Caco-2 (cell line): ENCODE measurements at regions of chr1 and their contacts with region 1.

Region 1: DNA sequence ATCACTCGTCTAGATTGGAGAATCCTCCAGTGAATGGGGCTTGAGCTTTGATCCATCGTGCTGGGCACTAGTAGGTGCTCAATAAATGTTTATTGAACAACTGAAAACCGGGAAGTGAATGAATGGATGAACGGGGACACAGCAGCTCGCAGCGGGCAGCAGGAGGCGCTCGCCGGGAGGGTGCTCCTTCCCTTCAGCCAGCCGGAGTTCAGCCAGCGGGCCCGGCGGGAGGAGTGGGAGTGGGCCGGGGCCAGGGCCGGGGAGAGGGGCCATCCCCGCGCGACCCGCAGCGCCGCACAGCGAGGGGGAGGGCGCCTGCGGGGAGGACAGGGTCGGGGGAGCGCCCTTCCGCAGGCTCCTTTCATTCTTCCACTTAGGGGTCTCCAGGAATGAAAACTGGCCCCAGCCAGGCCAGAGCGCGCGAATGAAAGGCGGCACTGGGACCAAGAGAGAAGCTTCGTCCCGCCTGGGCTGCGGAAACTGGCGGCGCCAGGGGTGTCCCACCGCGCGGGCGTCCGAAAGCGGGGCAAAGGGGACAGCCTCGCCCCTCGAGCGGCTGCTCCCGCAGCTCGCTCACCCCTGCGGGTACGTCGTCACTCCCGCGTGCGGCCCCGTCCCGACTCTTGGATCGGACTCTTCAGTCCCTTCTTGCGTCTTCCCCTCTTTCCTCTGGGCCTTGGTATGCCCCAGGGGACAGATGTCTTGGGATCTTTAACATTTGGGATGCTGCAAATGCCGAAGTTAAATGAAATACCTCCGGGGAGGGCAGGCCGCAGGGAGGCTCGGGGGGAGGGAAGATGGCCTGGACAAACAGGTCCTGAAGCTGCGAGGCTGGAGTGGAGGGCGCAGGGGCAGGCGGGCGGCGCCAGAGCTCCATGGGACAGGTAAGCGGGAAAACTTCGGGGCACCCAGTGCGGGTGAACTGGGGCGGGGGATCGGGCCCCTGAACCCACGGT is 3.6 kb upstream of the INAVA start:
- DNase-seq: peak; percentile 93 to 95
- H3K4me3 ChIP-seq: peak overlapping the region; percentile 73
- H3K4me3 Mint-ChIP-seq: peak overlapping the region; percentile 97
- H3K27ac Mint-ChIP-seq: peak overlapping the region; percentile 94
- H3K4me1 ChIP-seq: peaks cover 15% of the 10 kb centered on the region
- H3K4me1 Mint-ChIP-seq: peaks cover 30% of the 10 kb centered on the region
- H3K27me3 ChIP-seq: no peaks in the 10 kb centered on the region
- H3K27me3 Mint-ChIP-seq: no peaks in the 10 kb centered on the region
- CTCF ChIP-seq: peak; percentile 65 to 78

Region 2: DNA sequence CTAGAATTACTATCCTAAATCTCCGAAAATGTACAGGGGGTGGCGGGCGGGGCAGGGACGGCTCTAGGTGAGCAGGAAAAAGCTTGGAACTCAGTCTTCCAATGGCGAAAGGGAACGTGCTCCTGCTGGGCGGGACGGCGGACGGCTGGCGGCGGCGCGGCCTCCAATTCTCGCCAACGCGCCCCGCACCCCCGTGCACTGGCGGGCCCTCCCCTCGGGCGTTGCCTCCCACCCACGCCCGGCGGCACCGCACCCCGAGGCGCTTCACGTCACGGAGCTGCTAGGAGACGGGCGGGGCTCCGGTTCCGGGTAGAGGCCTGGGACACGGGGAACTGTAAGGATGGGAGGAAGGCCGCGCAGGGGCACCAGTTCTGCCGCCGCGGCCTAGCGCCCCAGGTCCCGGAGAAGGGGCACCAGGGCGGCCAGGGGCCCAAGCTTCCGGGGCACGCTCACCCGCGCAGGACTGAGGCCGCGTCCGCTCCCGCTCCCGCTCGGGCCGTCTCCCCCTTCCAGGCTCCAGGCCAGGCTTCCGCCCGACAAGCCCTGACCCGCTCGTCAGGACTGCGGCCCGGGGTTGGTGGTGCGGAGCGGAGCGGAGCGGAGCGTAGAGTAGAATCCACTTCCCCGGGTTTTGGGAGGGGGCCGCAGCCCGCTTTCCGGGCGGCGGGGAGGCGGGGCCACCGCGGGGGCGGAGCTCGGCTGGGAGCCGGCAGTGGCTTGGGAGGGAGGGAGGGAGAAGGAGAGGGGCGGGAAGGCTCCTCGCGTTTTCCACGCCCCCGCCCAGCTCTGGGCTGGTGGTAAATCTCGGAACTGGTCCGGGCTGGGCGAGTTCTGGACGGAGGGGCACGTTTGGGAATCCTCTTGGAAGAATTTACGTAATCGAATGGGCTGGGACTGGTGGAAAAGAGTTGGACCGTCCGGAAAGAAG is 221.5 kb before region 1 on chr1 and contains the start of gene DDX59:
- CTCF ChIA-PET with region 1: no interaction called
- POLR2A ChIA-PET with region 1: interaction called, 13 read pairs
- intact Hi-C with region 1: loop called (anchors 5 kb)
- DNase-seq: peak; percentile 97
- H3K4me3 ChIP-seq: peak within 1 kb of the TSS; percentile 97
- H3K4me3 Mint-ChIP-seq: peak within 1 kb of the TSS; percentile 99
- H3K27ac Mint-ChIP-seq: peak within 1 kb of the TSS; percentile 99
- H3K4me1 ChIP-seq: peaks cover 16% of the 10 kb centered on the region
- H3K4me1 Mint-ChIP-seq: peaks cover 10% of the 10 kb centered on the region
- H3K27me3 ChIP-seq: no peaks in the 10 kb centered on the region
- H3K27me3 Mint-ChIP-seq: no peaks in the 10 kb centered on the region
- CTCF ChIP-seq: no peak
- total RNA-seq, gene DDX59: 13.5 and 16.3 TPM in 2 replicates

Region 3: DNA sequence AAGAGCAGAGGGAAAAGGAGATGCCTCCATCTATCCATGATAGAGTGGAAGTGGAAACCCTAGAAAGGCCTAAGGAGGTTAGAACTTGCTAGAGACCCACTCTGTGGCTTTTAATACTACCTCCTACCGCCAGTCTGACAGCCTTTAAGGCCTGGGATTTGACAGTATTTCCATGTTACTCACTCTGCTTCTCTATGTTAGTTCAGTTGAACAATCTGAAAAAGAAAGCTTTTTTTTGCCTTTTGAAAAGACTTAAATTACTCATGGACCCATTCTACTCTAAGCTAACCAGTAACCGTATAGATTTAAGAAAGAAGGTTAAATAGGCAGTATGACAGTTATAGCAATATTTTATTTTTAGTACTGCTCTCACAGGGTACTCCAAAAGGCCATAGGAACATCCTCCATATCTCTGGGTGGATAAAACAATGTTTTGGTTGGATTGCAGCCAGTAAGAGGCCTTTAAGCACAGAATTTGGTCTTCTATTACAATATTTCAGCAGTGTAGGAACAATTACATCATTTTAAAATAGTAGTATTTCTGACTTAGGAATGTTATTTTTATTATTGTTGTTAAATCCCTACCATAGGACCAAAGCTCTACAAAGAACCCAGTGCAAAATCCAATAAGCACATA is 34.3 kb before region 1 on chr1:
- CTCF ChIA-PET with region 1: no interaction called
- POLR2A ChIA-PET with region 1: no interaction called
- intact Hi-C with region 1: no loop called
- DNase-seq: no peak
- H3K4me3 ChIP-seq: no peak overlapping the region
- H3K4me3 Mint-ChIP-seq: no peak overlapping the region
- H3K27ac Mint-ChIP-seq: no peak overlapping the region
- H3K4me1 ChIP-seq: no peaks in the 10 kb centered on the region
- H3K4me1 Mint-ChIP-seq: no peaks in the 10 kb centered on the region
- H3K27me3 ChIP-seq: no peaks in the 10 kb centered on the region
- H3K27me3 Mint-ChIP-seq: no peaks in the 10 kb centered on the region
- CTCF ChIP-seq: no peak

Region 4: DNA sequence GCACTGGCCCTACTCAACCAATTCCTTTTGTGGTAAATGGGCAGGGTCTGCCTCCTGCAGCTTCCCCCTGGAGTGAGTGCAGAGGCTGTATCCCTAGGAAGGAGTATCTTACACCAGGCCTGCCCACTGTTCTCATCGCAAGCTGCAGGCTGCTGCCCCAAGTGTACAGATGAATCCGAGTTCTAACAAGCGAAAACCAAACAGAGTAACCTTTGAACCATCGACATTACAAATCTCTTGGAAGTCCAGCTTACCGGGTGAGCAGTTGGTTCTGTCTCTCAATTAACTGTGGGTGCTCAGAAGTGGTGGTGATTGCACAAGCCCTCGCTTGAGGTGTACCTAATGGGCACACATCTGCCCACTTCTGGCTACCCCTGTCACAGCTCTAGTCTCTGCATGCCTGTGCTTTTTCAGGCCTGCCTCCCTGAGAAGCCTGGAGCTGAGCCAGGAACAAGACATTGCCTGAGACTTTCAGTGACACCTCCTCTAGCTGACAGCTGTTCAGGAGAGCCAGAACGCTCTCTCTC is 26.3 kb after region 1 on chr1:
- CTCF ChIA-PET with region 1: interaction called, 7 read pairs
- POLR2A ChIA-PET with region 1: interaction called, 3 read pairs
- intact Hi-C with region 1: loop called (anchors 2 kb)
- DNase-seq: peak in 1 of 2 experiments; percentile 43
- H3K4me3 ChIP-seq: no peak overlapping the region
- H3K4me3 Mint-ChIP-seq: no peak overlapping the region
- H3K27ac Mint-ChIP-seq: peak overlapping the region; percentile 75
- H3K4me1 ChIP-seq: peaks cover 7% of the 10 kb centered on the region
- H3K4me1 Mint-ChIP-seq: peaks cover 10% of the 10 kb centered on the region
- H3K27me3 ChIP-seq: no peaks in the 10 kb centered on the region
- H3K27me3 Mint-ChIP-seq: no peaks in the 10 kb centered on the region
- CTCF ChIP-seq: no peak

Region 5: GRCh38 chr1:200971955-200972711 is 81.0 kb after region 1 on chr1:
- CTCF ChIA-PET with region 1: interaction called, 9 read pairs
- POLR2A ChIA-PET with region 1: no interaction called
- intact Hi-C with region 1: loop called (anchors 1 kb)
- DNase-seq: peak; percentile 50 to 67
- H3K4me3 ChIP-seq: no peak overlapping the region
- H3K4me3 Mint-ChIP-seq: no peak overlapping the region
- H3K27ac Mint-ChIP-seq: no peak overlapping the region
- H3K4me1 ChIP-seq: no peaks in the 10 kb centered on the region
- H3K4me1 Mint-ChIP-seq: no peaks in the 10 kb centered on the region
- H3K27me3 ChIP-seq: no peaks in the 10 kb centered on the region
- H3K27me3 Mint-ChIP-seq: no peaks in the 10 kb centered on the region
- CTCF ChIP-seq: peak; percentile 60 to 94

Region 6: GRCh38 chr1:201023517-201023902 is 132.4 kb after region 1 on chr1 and contains the start of gene KIF21B:
- CTCF ChIA-PET with region 1: interaction called, 4 read pairs
- POLR2A ChIA-PET with region 1: interaction called, 4 read pairs
- intact Hi-C with region 1: loop called (anchors 5 kb)
- DNase-seq: peak; percentile 87 to 94
- H3K4me3 ChIP-seq: peak within 1 kb of the TSS; percentile 63
- H3K4me3 Mint-ChIP-seq: peak within 1 kb of the TSS; percentile 66
- H3K27ac Mint-ChIP-seq: no peak within 1 kb of the TSS
- H3K4me1 ChIP-seq: peaks cover 21% of the 10 kb centered on the region
- H3K4me1 Mint-ChIP-seq: peaks cover 25% of the 10 kb centered on the region
- H3K27me3 ChIP-seq: no peaks in the 10 kb centered on the region; the same call in 1 of the 2 replicates
- H3K27me3 Mint-ChIP-seq: peaks cover 3% of the 10 kb centered on the region
- CTCF ChIP-seq: no peak
- total RNA-seq, gene KIF21B: 2.4 and 2.6 TPM in 2 replicates

Region 7: DNA sequence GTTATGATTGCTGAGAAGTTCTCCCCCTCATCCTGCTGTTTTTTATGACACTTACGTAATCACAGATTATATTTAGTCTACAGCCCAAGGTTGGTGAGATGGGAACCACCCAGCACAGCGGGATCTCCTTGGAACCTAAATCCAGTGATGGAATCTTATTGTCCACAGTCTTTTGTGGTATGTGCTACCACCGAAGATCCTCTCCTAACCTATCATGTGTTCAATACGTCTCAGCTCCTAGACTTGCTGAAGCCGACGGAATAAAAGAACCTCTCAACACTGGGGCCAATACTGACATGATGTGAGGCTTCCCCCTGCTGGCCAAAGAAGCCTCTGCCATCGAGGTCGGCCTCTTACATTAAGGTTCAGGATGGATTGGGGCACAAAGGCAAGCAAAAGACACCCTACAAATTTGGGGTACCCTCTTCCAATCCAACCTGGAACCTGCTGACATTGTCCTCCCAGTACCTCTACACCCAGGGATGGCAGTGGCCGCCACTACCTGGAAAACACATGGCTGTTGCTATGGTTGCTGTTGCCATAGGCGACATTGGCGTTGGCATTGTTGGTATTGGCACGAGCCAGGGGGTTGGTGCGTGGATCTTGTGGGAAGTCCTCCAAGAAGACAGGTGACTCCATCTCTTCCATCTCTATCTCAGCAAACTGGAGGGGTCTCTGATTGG is 151.8 kb after region 1 on chr1:
- CTCF ChIA-PET with region 1: interaction called, 13 read pairs
- POLR2A ChIA-PET with region 1: no interaction called
- intact Hi-C with region 1: loop called (anchors 1 kb)
- DNase-seq: peak; percentile 67 to 73
- H3K4me3 ChIP-seq: no peak overlapping the region
- H3K4me3 Mint-ChIP-seq: no peak overlapping the region
- H3K27ac Mint-ChIP-seq: no peak overlapping the region
- H3K4me1 ChIP-seq: no peaks in the 10 kb centered on the region
- H3K4me1 Mint-ChIP-seq: no peaks in the 10 kb centered on the region
- H3K27me3 ChIP-seq: no peaks in the 10 kb centered on the region
- H3K27me3 Mint-ChIP-seq: peaks cover 2% of the 10 kb centered on the region
- CTCF ChIP-seq: peak; percentile 83 to 85

Region 8: DNA sequence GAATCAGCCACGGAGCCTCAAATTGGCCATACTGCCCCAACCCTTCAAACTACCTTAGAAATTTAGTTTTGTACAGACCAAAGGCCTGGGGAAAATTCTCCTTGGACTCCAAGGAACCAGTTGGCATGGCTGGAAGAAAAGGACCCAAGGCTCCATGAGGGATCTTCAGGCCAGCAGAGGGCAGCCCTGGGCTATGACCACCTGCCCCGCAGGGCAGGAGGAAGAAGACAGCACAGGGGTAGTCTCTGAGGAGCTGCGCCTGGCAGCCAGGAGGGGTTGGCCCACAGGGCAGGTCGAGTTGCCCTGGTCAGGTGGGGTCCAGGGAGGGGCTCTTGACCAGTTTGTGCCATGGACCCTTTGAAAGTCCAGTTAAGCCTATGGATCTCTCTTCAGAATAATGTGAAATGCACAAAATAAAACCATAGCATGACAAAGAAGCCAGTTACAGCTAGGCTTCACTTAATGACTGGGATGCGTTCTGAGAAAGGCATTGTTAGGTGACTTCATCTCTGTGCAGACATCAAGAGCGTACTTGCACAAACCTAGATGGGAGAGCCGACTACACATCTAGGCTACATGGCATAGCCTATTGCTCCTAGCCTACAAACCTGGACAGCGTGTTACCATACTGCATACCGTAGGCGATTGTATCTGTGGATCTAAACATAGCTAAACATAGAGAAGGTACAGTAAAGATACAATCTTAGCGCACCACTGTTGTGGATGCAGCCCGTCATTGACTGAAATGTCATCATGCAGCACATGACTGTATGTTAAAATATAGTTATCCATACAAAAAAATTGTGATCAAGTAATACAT is 195.0 kb after region 1 on chr1:
- CTCF ChIA-PET with region 1: no interaction called
- POLR2A ChIA-PET with region 1: no interaction called
- intact Hi-C with region 1: no loop called
- DNase-seq: peak; percentile 65 to 76
- H3K4me3 ChIP-seq: no peak overlapping the region
- H3K4me3 Mint-ChIP-seq: no peak overlapping the region
- H3K27ac Mint-ChIP-seq: no peak overlapping the region
- H3K4me1 ChIP-seq: no peaks in the 10 kb centered on the region
- H3K4me1 Mint-ChIP-seq: peaks cover 11% of the 10 kb centered on the region
- H3K27me3 ChIP-seq: no peaks in the 10 kb centered on the region
- H3K27me3 Mint-ChIP-seq: no peaks in the 10 kb centered on the region
- CTCF ChIP-seq: peak; percentile 76 to 86

Region 9: GRCh38 chr1:201114236-201115131 is 223.4 kb after region 1 on chr1:
- CTCF ChIA-PET with region 1: no interaction called
- POLR2A ChIA-PET with region 1: no interaction called
- intact Hi-C with region 1: loop called (anchors 5 kb)
- DNase-seq: peak; percentile 86 to 87
- H3K4me3 ChIP-seq: no peak overlapping the region
- H3K4me3 Mint-ChIP-seq: peak overlapping the region; percentile 24
- H3K27ac Mint-ChIP-seq: no peak overlapping the region
- H3K4me1 ChIP-seq: 0 out of 2 replicates have a peak, but pooled peaks cover 9% of the 10 kb centered on the region
- H3K4me1 Mint-ChIP-seq: peaks cover 15% of the 10 kb centered on the region
- H3K27me3 ChIP-seq: no peaks in the 10 kb centered on the region
- H3K27me3 Mint-ChIP-seq: no peaks in the 10 kb centered on the region
- CTCF ChIP-seq: peak; percentile 85 to 90